ENCODE measurements at regions of chr4 and their contacts with region 1.

Region 1: GRCh38 chr4:40916880-40917279 is 167.1 kb downstream of the NSUN7 start:
- DNase-seq: peak in 1 of 2 donors; percentile 69
- ATAC-seq: peak; percentile 33 to 59
- H3K4me3 ChIP-seq: no peak overlapping the region
- H3K27ac ChIP-seq: peak overlapping the region; percentile 52 to 75 (median 70)
- H3K4me1 ChIP-seq: peaks cover 34 to 37% of the 10 kb centered on the region in 2 donors
- H3K27me3 ChIP-seq: no peaks in the 10 kb centered on the region
- CTCF ChIP-seq: peak; percentile 21 to 58 (median 50)
- POLR2A ChIP-seq: no peak

Region 2: DNA sequence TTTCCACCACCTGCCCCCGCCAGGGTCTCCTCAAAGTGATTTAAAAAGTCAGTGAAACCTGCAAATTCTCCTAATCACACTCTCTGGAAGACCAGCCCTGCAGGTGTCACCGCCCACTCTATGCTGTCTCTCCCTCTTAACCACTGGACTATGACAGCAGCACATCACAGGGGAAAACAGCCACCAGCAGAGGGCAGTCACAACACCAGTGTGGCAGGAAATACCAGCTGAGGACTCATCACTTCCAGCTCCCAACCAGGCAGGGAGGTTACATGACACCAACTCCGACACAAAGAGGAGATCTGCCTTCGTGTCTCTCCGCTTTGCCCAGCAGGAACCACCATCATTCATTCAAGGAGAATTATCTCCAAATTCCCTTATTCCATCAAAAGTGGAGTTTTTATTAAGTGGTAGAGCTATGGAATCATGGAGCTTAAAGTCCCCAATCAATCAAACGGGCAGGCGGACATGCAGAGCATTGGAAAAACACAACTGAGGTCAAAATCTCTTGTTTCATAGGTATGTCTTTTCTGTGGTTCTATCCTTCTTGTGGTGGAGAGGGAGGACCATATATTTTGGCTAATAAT is 75.8 kb before region 1 on chr4:
- in situ Hi-C with region 1: no loop called
- intact Hi-C with region 1: loop called (anchors 5 kb)
- DNase-seq: peak; percentile 31 to 77
- ATAC-seq: peak; percentile 54 to 81
- H3K4me3 ChIP-seq: no peak overlapping the region
- H3K27ac ChIP-seq: peak overlapping the region; percentile 29 to 76 (median 72)
- H3K4me1 ChIP-seq: peaks cover 31 to 72% of the 10 kb centered on the region in 2 donors
- H3K27me3 ChIP-seq: no peaks in the 10 kb centered on the region
- CTCF ChIP-seq: peak; percentile 12 to 74 (median 64)
- POLR2A ChIP-seq: no peak

Region 3: GRCh38 chr4:40875507-40876150 is 41.3 kb before region 1 on chr4:
- in situ Hi-C with region 1: no loop called
- intact Hi-C with region 1: no loop called
- DNase-seq: no peak
- ATAC-seq: no peak
- H3K4me3 ChIP-seq: no peak overlapping the region
- H3K27ac ChIP-seq: no peak overlapping the region
- H3K4me1 ChIP-seq: no peaks in the 10 kb centered on the region
- H3K27me3 ChIP-seq: no peaks in the 10 kb centered on the region
- CTCF ChIP-seq: no peak
- POLR2A ChIP-seq: no peak

Region 4: GRCh38 chr4:40940317-40940741 is 23.4 kb after region 1 on chr4:
- in situ Hi-C with region 1: no loop called
- intact Hi-C with region 1: no loop called
- DNase-seq: peak; percentile 40 to 63
- ATAC-seq: peak; percentile 71 to 74
- H3K4me3 ChIP-seq: no peak overlapping the region
- H3K27ac ChIP-seq: peak overlapping the region; percentile 36 to 55 (median 43)
- H3K4me1 ChIP-seq: peaks cover 27 to 32% of the 10 kb centered on the region in 2 donors
- H3K27me3 ChIP-seq: no peaks in the 10 kb centered on the region
- CTCF ChIP-seq: no peak
- POLR2A ChIP-seq: no peak

Region 5: DNA sequence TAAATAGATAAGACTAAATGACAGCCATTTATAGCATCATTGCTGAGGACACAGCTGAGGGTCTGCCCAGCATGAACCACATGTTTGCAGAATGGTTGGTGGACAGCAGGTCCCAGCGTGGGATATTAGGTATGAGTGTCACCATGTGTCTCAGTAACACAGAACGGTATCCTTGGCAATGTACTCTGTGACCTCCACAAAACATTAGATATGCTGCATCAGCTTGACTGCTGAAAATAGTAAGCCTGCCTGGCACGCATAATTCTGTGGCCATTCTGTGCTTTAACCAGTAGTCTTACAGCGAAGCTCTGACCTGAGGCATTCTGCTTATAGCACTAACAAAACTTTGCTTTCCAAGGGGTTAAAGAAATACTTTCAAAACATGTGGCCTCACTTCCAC is 653.1 kb after region 1 on chr4:
- in situ Hi-C with region 1: no loop called
- intact Hi-C with region 1: loop called (anchors 5 kb)
- DNase-seq: peak; percentile 43 to 75
- ATAC-seq: peak; percentile 62 to 89
- H3K4me3 ChIP-seq: no peak overlapping the region
- H3K27ac ChIP-seq: peak overlapping the region; percentile 75 to 87 (median 82)
- H3K4me1 ChIP-seq: peaks cover 78 to 80% of the 10 kb centered on the region in 2 donors
- H3K27me3 ChIP-seq: no peaks in the 10 kb centered on the region
- CTCF ChIP-seq: peak in 2 of 5 experiments; percentile 13 to 26
- POLR2A ChIP-seq: no peak